GM23248 (cell line): ENCODE measurements at regions of chr18 and their contacts with region 1.

Region 1: DNA sequence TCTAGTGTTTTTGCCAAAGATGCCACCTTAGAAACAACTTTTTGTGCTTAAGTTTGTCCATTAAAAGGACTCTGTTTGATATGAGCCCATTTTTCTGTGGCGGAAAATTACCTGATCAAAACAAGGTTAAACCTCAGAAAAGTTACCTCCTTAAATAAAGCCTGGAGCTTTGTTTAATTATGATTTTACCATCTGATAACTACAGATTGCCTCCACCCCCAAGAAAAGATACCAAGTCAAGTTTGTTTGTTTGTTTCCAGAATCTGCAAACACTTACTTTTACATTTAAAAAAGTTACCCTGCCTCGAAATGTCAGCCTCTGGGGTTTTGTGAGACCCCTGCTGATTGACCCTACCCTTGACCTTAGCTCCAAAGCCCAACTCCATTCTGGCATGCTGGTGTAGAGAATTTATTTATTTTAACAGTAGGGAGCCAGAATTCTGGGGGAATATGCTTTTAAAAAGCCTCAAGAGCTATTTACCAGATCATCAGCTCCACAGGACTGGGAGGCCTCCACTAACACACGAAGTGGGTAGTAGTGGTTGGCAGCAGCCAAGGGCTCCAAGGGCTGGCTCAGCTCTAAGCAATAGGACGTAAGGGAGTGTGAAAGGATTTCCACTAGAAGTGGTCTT is 23.3 kb upstream of the GREB1L start:
- DNase-seq: no peak
- H3K4me3 ChIP-seq: no peak overlapping the region
- H3K27ac ChIP-seq: no peak overlapping the region
- H3K4me1 ChIP-seq: no peaks in the 10 kb centered on the region
- H3K27me3 ChIP-seq: no peaks in the 10 kb centered on the region

Region 2: GRCh38 chr18:21004726-21005125 is 214.0 kb before region 1 on chr18:
- in situ Hi-C with region 1: no loop called
- DNase-seq: peak; percentile 96
- H3K4me3 ChIP-seq: peak overlapping the region; percentile 16
- H3K27ac ChIP-seq: peak overlapping the region; percentile 91
- H3K4me1 ChIP-seq: peaks cover 30% of the 10 kb centered on the region
- H3K27me3 ChIP-seq: no peaks in the 10 kb centered on the region

Region 3: GRCh38 chr18:21303913-21304312 is 85.2 kb after region 1 on chr18:
- in situ Hi-C with region 1: no loop called
- DNase-seq: peak; percentile 30
- H3K4me3 ChIP-seq: no peak overlapping the region
- H3K27ac ChIP-seq: no peak overlapping the region
- H3K4me1 ChIP-seq: peaks cover 17% of the 10 kb centered on the region
- H3K27me3 ChIP-seq: no peaks in the 10 kb centered on the region

Region 4: DNA sequence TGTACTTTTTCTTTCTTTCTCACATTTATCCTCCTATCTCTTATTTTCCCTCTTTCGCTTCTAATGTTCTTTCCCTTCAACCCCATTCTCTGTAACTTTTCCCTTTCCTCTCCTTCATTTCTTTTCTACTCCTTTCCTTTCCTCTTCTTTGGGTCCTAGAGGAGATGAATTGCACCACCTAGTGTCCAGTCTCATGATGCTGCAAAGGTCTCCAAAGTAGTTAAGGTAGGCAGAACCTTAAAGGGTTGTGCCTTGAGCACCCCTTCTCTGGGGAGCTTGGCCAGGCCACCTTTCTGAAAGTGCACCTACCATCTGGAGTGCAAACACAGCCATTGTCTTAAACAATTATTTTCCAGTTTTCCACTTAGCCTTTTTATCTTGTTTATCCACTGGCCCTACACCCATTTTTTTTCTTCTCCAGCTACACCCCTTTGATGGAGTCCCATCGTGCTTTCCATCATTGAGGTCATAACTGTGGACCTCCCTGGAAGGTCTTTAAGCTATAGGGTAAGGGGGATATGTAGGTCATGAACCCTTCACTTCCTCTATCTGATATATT is 225.8 kb after region 1 on chr18:
- in situ Hi-C with region 1: loop called (anchors 25 kb)
- DNase-seq: peak; percentile 68
- H3K4me3 ChIP-seq: no peak overlapping the region
- H3K27ac ChIP-seq: no peak overlapping the region
- H3K4me1 ChIP-seq: peaks cover 11% of the 10 kb centered on the region
- H3K27me3 ChIP-seq: no peaks in the 10 kb centered on the region